HCT116 (cell line): ENCODE measurements at regions of chr5 and their contacts with region 1.

Region 1: DNA sequence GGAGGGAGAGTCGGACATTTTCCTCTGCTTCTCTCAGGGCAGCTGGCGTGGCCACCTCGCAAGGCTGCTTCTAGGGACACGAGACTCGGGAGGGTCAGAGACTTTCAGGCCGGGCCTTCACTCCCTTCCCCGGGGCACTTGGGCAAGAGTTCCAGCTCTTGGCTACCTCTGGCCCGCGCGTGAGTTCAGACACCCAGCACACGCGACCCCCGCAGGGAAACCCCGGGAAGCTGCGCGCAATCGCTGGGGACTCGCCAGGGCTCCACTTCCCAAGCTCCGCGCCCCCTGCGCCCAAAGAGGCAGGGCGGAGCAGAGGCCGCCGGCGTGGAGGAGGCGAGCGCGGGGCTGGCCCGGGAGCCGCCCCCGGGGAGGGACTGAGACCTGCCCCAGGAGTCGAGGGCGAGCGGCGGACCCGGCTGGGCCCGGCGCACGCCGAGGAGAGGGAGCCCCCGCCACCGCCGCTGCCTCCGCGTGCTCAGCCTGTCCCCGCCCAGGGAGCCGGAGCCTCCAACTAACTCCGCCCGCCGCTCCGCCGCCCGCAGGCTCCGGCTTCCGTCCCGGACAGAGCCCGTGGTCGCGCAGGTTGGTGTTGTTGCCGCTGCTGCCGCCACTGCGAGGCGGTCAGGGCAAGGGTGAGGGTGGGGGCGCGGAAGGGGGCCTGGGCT is at the start of gene PAM:
- DNase-seq: no peak
- ATAC-seq: peak; percentile 85
- H3K4me3 ChIP-seq: peak within 1 kb of the TSS; percentile 95 to 99
- H3K27ac ChIP-seq: peak within 1 kb of the TSS; percentile 82
- H3K4me1 ChIP-seq: peaks cover 13 to 33% of the 10 kb centered on the region in 2 experiments
- H3K27me3 ChIP-seq: no peaks in the 10 kb centered on the region
- CTCF ChIP-seq: no peak
- POLR2A ChIP-seq: peak; percentile 60
- RAD21 ChIP-seq: no peak
- total RNA-seq, gene PAM: 257 TPM

Region 2: DNA sequence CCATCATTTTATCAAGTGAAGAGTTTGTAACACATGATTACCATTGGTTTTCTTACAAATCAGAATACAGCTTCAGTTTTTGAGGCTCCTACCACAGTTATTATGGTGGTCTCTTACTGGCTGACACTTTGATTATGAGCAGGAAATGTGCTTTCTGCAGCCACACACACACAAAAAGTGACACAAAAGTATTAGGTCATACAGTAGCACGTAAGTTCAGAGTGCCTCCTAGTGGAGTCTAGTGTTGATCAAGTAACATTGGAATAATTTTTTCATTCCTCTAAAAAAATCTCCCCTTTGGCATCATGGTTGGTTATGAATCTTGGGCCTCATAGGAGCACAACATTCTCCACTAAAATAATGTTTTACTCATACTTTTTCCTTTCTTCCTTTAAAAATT is 37.8 kb after region 1 on chr5:
- CTCF ChIA-PET with region 1: no interaction called
- POLR2A ChIA-PET with region 1: no interaction called
- RAD21 ChIA-PET with region 1: no interaction called
- intact Hi-C with region 1: loop called (anchors 1 kb)
- DNase-seq: no peak
- ATAC-seq: peak; percentile 66
- H3K4me3 ChIP-seq: no peak overlapping the region
- H3K27ac ChIP-seq: no peak overlapping the region
- H3K4me1 ChIP-seq: peaks cover 26 to 49% of the 10 kb centered on the region in 2 experiments
- H3K27me3 ChIP-seq: no peaks in the 10 kb centered on the region
- CTCF ChIP-seq: peak; percentile 16 to 40 (median 26); a peak in 3 of 6 replicates
- POLR2A ChIP-seq: no peak
- RAD21 ChIP-seq: peak; percentile 48